ENCODE measurements at regions of chr9 and their contacts with region 1.

Region 1: GRCh38 chr9:93268551-93269314 is 84.8 kb downstream of the WNK2 start:
- DNase-seq: peak; percentile 97
- H3K4me3 ChIP-seq: peak overlapping the region; percentile 74
- H3K27ac ChIP-seq: peak overlapping the region; percentile 99
- H3K4me1 ChIP-seq: peaks cover 84% of the 10 kb centered on the region
- CTCF ChIP-seq: no peak

Region 2: GRCh38 chr9:92010705-92011536 is 1257.8 kb before region 1 on chr9:
- CTCF ChIA-PET with region 1: no interaction called
- POLR2A ChIA-PET with region 1: no interaction called
- intact Hi-C with region 1: no loop called
- DNase-seq: no peak
- H3K4me3 ChIP-seq: no peak overlapping the region
- H3K27ac ChIP-seq: no peak overlapping the region
- H3K4me1 ChIP-seq: no peaks in the 10 kb centered on the region
- CTCF ChIP-seq: no peak

Region 3: GRCh38 chr9:92728831-92729734 is 539.6 kb before region 1 on chr9:
- CTCF ChIA-PET with region 1: no interaction called
- POLR2A ChIA-PET with region 1: no interaction called
- intact Hi-C with region 1: loop called (anchors 10 kb)
- DNase-seq: peak; percentile 91
- H3K4me3 ChIP-seq: peak overlapping the region; percentile 63
- H3K27ac ChIP-seq: peak overlapping the region; percentile 83
- H3K4me1 ChIP-seq: peaks cover 85% of the 10 kb centered on the region
- CTCF ChIP-seq: peak; percentile 93

Region 4: GRCh38 chr9:93064392-93065134 is 204.2 kb before region 1 on chr9:
- CTCF ChIA-PET with region 1: no interaction called
- POLR2A ChIA-PET with region 1: no interaction called
- intact Hi-C with region 1: loop called (anchors 5 kb)
- DNase-seq: peak; percentile 98
- H3K4me3 ChIP-seq: peak overlapping the region; percentile 79
- H3K27ac ChIP-seq: peak overlapping the region; percentile 95
- H3K4me1 ChIP-seq: peaks cover 61% of the 10 kb centered on the region
- CTCF ChIP-seq: no peak

Region 5: GRCh38 chr9:93183609-93184431 is 84.9 kb before region 1 on chr9 and contains the start of gene WNK2:
- CTCF ChIA-PET with region 1: no interaction called
- POLR2A ChIA-PET with region 1: no interaction called
- intact Hi-C with region 1: no loop called
- DNase-seq: peak; percentile 57
- H3K4me3 ChIP-seq: peak within 1 kb of the TSS; percentile 70
- H3K27ac ChIP-seq: no peak within 1 kb of the TSS
- H3K4me1 ChIP-seq: peaks cover 20% of the 10 kb centered on the region
- CTCF ChIP-seq: no peak
- total RNA-seq, gene WNK2: 118 and 142 TPM in 2 replicates

Region 6: GRCh38 chr9:93280661-93281259 is 12.0 kb after region 1 on chr9:
- CTCF ChIA-PET with region 1: no interaction called
- POLR2A ChIA-PET with region 1: interaction called, 170 read pairs
- intact Hi-C with region 1: no loop called
- DNase-seq: no peak
- H3K4me3 ChIP-seq: no peak overlapping the region
- H3K27ac ChIP-seq: peak overlapping the region; percentile 98
- H3K4me1 ChIP-seq: peaks cover 99% of the 10 kb centered on the region
- CTCF ChIP-seq: no peak

Region 7: GRCh38 chr9:93288891-93289883 is 20.5 kb after region 1 on chr9:
- CTCF ChIA-PET with region 1: interaction called, 8 read pairs
- POLR2A ChIA-PET with region 1: interaction called, 170 read pairs
- intact Hi-C with region 1: loop called (anchors 1 kb)
- DNase-seq: no peak
- H3K4me3 ChIP-seq: peak overlapping the region; percentile 42
- H3K27ac ChIP-seq: peak overlapping the region; percentile 98
- H3K4me1 ChIP-seq: peaks cover 93% of the 10 kb centered on the region
- CTCF ChIP-seq: no peak

Region 8: GRCh38 chr9:93295031-93295430 is 26.3 kb after region 1 on chr9:
- CTCF ChIA-PET with region 1: interaction called, 8 read pairs
- POLR2A ChIA-PET with region 1: interaction called, 170 read pairs
- intact Hi-C with region 1: loop called (anchors 2 kb)
- DNase-seq: peak; percentile 41
- H3K4me3 ChIP-seq: peak overlapping the region; percentile 28
- H3K27ac ChIP-seq: peak overlapping the region; percentile 93
- H3K4me1 ChIP-seq: peaks cover 80% of the 10 kb centered on the region
- CTCF ChIP-seq: no peak

Region 9: DNA sequence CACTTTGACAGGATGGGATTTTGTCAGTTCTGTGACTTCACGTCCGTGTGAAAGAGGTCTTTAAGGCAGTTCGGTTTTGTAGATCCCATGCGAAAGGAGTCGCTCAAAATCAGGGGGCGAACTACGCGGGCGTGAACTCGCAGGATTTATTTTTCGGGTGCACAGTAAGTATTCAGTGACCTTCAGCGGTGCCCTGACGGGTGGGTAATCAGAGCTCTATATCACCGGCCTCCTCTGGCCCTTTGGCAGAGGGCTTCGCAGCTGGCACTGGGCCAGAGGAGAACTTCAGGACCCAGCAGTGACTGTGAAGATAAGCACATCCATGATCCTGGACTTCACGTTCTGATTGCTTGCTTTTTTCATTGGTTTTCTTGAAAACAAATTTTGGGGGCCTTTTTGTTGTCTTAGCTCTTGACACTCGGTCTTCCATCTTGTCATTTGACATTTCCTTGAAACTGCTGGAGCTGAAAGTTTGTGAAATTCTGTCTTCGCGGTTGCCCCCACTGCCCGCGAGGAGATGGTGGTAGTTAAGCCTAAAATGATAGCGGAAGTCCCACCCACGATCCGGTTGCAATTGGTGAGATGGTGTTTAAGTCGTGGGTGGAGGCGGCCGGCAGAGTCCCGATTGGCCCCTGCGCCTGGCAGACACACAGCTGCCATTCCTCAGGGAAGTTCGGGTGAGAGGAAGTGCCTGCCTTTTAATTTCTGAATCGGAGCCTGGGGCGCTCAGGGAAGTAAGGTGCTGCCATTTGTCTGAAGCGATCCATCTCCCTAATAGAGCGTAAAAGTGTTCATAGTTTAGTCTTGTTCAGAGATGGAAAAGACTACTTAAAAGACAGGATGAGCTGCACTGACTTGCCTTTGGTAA is 184.5 kb after region 1 on chr9 and contains the start of gene FAM120AOS:
- CTCF ChIA-PET with region 1: no interaction called
- POLR2A ChIA-PET with region 1: no interaction called
- intact Hi-C with region 1: loop called (anchors 2 kb)
- DNase-seq: peak; percentile 91
- H3K4me3 ChIP-seq: peak within 1 kb of the TSS; percentile 83
- H3K27ac ChIP-seq: peak within 1 kb of the TSS; percentile 74
- H3K4me1 ChIP-seq: peaks cover 58% of the 10 kb centered on the region
- CTCF ChIP-seq: no peak
- total RNA-seq, gene FAM120AOS: 47.1 and 50.2 TPM in 2 replicates

Measured in OCI-LY7 (cell line).